Endothelial cell of umbilical vein (primary cell): ENCODE measurements at regions of chr12 and their contacts with region 1.

Region 1: GRCh38 chr12:111766608-111767361 is at the start of gene ALDH2:
- DNase-seq: peak; percentile 77
- H3K4me3 ChIP-seq: peak within 1 kb of the TSS; percentile 58 to 75 (median 68)
- H3K27ac ChIP-seq: peak within 1 kb of the TSS; percentile 58
- H3K4me1 ChIP-seq: peaks cover 18% of the 10 kb centered on the region
- H3K27me3 ChIP-seq: peaks cover 0 to 3% of the 10 kb centered on the region in 2 experiments
- CTCF ChIP-seq: no peak
- POLR2A ChIP-seq: peak; percentile 82
- total RNA-seq, gene ALDH2: 71.4 and 86.5 TPM in 2 replicates

Region 2: DNA sequence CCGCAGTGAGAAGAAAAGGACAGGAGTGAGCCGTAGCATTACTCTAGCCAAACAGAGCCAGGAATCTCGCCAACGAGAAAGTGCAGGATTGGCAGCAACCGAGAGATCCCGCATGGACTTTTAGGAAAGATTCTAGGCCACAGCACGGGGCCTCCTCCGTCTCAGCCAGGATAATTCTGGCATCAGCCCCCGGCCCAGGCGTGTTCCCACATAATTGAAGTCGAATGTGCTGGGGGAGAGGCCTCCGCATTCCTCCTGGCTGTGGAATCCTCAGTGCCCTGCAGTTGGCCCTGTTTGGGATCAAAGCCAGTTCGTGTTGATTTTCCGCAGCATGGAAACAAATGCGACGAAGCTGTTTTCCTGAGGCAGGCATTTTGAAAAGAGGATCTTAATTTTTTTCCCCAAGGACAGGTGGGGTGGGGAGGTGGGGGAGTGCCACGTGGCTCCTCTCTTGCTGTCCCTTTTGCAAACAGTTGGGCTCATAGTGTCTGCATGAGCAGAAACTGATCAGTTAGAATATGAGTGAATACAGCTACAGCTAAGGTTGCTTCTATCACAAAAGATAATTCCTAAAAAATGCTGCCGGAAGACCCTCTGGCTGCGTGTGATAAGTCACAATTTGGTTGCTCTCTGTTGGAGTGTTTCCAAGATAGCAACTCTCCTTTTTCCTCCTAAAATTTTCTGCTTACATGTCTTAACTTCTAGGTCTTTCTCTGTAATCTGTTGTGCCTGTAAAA is 130.4 kb before region 1 on chr12:
- CTCF ChIA-PET with region 1: no interaction called
- POLR2A ChIA-PET with region 1: no interaction called
- dilution Hi-C with region 1: no loop called
- intact Hi-C with region 1: no loop called
- DNase-seq: peak; percentile 55
- H3K4me3 ChIP-seq: no peak overlapping the region
- H3K27ac ChIP-seq: no peak overlapping the region
- H3K4me1 ChIP-seq: peaks cover 6% of the 10 kb centered on the region
- H3K27me3 ChIP-seq: no peaks in the 10 kb centered on the region
- CTCF ChIP-seq: no peak
- POLR2A ChIP-seq: no peak

Region 3: GRCh38 chr12:111741235-111741812 is 25.5 kb before region 1 on chr12:
- CTCF ChIA-PET with region 1: interaction called, 5 read pairs
- POLR2A ChIA-PET with region 1: no interaction called
- dilution Hi-C with region 1: no loop called
- intact Hi-C with region 1: loop called (anchors 1 kb)
- DNase-seq: peak; percentile 99
- H3K4me3 ChIP-seq: no peak overlapping the region
- H3K27ac ChIP-seq: peak overlapping the region; percentile 72
- H3K4me1 ChIP-seq: peaks cover 24% of the 10 kb centered on the region
- H3K27me3 ChIP-seq: no peaks in the 10 kb centered on the region
- CTCF ChIP-seq: no peak
- POLR2A ChIP-seq: peak; percentile 67

Region 4: GRCh38 chr12:111788178-111788654 is 21.4 kb after region 1 on chr12:
- CTCF ChIA-PET with region 1: interaction called, 11 read pairs
- POLR2A ChIA-PET with region 1: no interaction called
- dilution Hi-C with region 1: no loop called
- intact Hi-C with region 1: loop called (anchors 1 kb)
- DNase-seq: no peak
- H3K4me3 ChIP-seq: no peak overlapping the region
- H3K27ac ChIP-seq: no peak overlapping the region
- H3K4me1 ChIP-seq: peaks cover 10% of the 10 kb centered on the region
- H3K27me3 ChIP-seq: no peaks in the 10 kb centered on the region
- CTCF ChIP-seq: peak; percentile 4 to 35
- POLR2A ChIP-seq: no peak